Breast epithelium (tissue), 4 donors: ENCODE measurements at regions of chr5 and their contacts with region 1.

Region 1: DNA sequence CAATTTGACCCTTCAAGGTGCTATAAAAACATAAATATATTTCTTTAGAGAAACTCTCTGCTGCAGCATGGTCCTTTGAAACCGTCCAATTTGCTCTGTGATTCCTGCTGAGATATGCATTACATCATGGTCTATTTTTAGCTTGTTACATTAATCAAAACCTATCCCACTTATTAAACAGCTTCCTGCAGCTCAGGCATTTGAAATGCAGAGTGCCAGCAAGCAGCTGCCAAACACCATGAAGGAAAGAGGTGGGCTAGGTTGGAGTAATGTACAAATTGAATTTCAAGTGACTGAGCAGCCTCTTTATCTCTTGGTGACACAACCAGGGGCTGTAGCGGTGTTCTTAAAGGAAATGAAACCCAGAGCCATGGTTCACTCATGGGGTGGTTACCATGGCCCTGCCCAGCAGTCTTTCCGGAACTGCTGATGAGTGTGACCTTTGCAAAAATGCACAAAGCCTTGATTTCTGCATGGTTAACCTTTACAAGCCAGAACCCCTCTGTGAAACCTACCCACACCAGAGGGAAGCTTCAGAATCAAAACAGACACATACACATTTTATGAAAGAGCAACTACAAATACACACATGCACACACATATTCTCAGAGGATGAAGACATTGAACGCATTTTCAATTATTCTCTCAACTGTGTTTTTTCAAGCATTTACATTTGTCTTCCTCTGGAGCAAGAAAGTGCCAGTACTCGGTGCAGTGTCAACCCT is 155.8 kb upstream of the ZNF608 start:
- DNase-seq: no peak
- H3K4me3 ChIP-seq: no peak overlapping the region
- H3K27ac ChIP-seq: no peak overlapping the region
- H3K4me1 ChIP-seq: peaks cover 0 to 7% of the 10 kb centered on the region in 2 donors
- H3K27me3 ChIP-seq: no peaks in the 10 kb centered on the region
- CTCF ChIP-seq: no peak
- POLR2A ChIP-seq: no peak

Region 2: GRCh38 chr5:124419531-124419930 is 482.7 kb before region 1 on chr5:
- intact Hi-C with region 1: no loop called
- DNase-seq: no peak
- H3K4me3 ChIP-seq: no peak overlapping the region
- H3K27ac ChIP-seq: no peak overlapping the region
- H3K4me1 ChIP-seq: no peaks in the 10 kb centered on the region
- H3K27me3 ChIP-seq: no peaks in the 10 kb centered on the region
- CTCF ChIP-seq: no peak
- POLR2A ChIP-seq: no peak

Region 3: GRCh38 chr5:124583469-124584350 is 318.5 kb before region 1 on chr5:
- intact Hi-C with region 1: loop called (anchors 5 kb)
- DNase-seq: no peak
- H3K4me3 ChIP-seq: no peak overlapping the region
- H3K27ac ChIP-seq: no peak overlapping the region
- H3K4me1 ChIP-seq: peaks cover 0 to 5% of the 10 kb centered on the region in 2 donors
- H3K27me3 ChIP-seq: no peaks in the 10 kb centered on the region
- CTCF ChIP-seq: no peak
- POLR2A ChIP-seq: no peak

Region 4: DNA sequence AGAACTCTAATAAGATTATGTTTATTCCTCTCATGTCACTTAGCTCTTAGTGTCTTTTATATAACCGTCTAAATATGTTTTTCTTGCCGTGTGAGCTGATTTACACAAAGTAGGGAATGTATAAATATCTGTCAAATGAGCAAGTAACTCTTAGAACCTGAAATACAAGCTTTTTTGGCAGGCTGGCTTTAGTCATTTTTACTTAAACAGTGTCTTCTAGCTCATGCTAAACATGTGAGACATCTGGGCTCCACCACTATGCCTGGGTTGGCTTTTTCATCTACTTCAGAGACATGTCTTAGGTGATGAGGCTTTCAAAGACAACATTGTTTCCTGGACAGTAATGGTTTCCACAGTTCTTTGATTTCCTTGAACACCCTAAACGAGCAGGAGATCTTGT is 18.6 kb before region 1 on chr5:
- intact Hi-C with region 1: loop called (anchors 1 kb)
- DNase-seq: no peak
- H3K4me3 ChIP-seq: no peak overlapping the region
- H3K27ac ChIP-seq: no peak overlapping the region
- H3K4me1 ChIP-seq: no peaks in the 10 kb centered on the region
- H3K27me3 ChIP-seq: no peaks in the 10 kb centered on the region
- CTCF ChIP-seq: no peak
- POLR2A ChIP-seq: no peak

Region 5: GRCh38 chr5:125835293-125836172 is 933.3 kb after region 1 on chr5:
- intact Hi-C with region 1: loop called (anchors 5 kb)
- DNase-seq: no peak
- H3K4me3 ChIP-seq: peak overlapping the region in 1 of 3 donors; percentile 38
- H3K27ac ChIP-seq: no peak overlapping the region
- H3K4me1 ChIP-seq: no peaks in the 10 kb centered on the region
- H3K27me3 ChIP-seq: no peaks in the 10 kb centered on the region
- CTCF ChIP-seq: peak; percentile 61 to 70 (median 64)
- POLR2A ChIP-seq: no peak